ENCODE measurements at regions of chr17 and their contacts with region 1.

Region 1: GRCh38 chr17:57271821-57272220 is 15.5 kb downstream of the MSI2 start:
- DNase-seq: no peak
- ATAC-seq: no peak
- H3K4me3 ChIP-seq: no peak overlapping the region
- H3K27ac ChIP-seq: no peak overlapping the region
- H3K4me1 ChIP-seq: no peaks in the 10 kb centered on the region; the same call in 1 of the 2 replicates
- H3K27me3 ChIP-seq: no peaks in the 10 kb centered on the region
- CTCF ChIP-seq: no peak
- EP300 ChIP-seq: no peak
- POLR2A ChIP-seq: no peak
- RAD21 ChIP-seq: no peak

Region 2: GRCh38 chr17:57174591-57174990 is 97.2 kb before region 1 on chr17:
- CTCF ChIA-PET with region 1: no interaction called
- POLR2A ChIA-PET with region 1: no interaction called
- RAD21 ChIA-PET with region 1: no interaction called
- SMC1A ChIA-PET with region 1: no interaction called
- in situ Hi-C with region 1: no loop called
- intact Hi-C with region 1: no loop called
- DNase-seq: peak; percentile 55
- ATAC-seq: peak; percentile 95
- H3K4me3 ChIP-seq: 0 out of 2 replicates have a peak overlapping the region, but pooled peaks have one; percentile 1
- H3K27ac ChIP-seq: peak overlapping the region; percentile 13; the same call in 1 of the 2 replicates
- H3K4me1 ChIP-seq: peaks cover 13% of the 10 kb centered on the region
- H3K27me3 ChIP-seq: no peaks in the 10 kb centered on the region
- CTCF ChIP-seq: no peak
- EP300 ChIP-seq: peak in 1 of 2 experiments; percentile 74; a peak in 1 of 4 replicates
- POLR2A ChIP-seq: no peak
- RAD21 ChIP-seq: no peak

Region 3: GRCh38 chr17:57255776-57256681 is 15.8 kb before region 1 on chr17 and contains the start of gene MSI2:
- CTCF ChIA-PET with region 1: interaction called, 8 read pairs
- POLR2A ChIA-PET with region 1: interaction called, 4 read pairs
- RAD21 ChIA-PET with region 1: no interaction called
- SMC1A ChIA-PET with region 1: interaction called, 29 read pairs
- in situ Hi-C with region 1: no loop called
- intact Hi-C with region 1: no loop called
- DNase-seq: peak; percentile 51
- ATAC-seq: peak; percentile 82
- H3K4me3 ChIP-seq: peak within 1 kb of the TSS; percentile 95
- H3K27ac ChIP-seq: peak within 1 kb of the TSS; percentile 34
- H3K4me1 ChIP-seq: peaks cover 6% of the 10 kb centered on the region
- H3K27me3 ChIP-seq: no peaks in the 10 kb centered on the region
- CTCF ChIP-seq: no peak
- EP300 ChIP-seq: no peak
- POLR2A ChIP-seq: no peak
- RAD21 ChIP-seq: no peak
- polyA plus RNA-seq, gene MSI2: 6.1 to 9.5 TPM

Region 4: DNA sequence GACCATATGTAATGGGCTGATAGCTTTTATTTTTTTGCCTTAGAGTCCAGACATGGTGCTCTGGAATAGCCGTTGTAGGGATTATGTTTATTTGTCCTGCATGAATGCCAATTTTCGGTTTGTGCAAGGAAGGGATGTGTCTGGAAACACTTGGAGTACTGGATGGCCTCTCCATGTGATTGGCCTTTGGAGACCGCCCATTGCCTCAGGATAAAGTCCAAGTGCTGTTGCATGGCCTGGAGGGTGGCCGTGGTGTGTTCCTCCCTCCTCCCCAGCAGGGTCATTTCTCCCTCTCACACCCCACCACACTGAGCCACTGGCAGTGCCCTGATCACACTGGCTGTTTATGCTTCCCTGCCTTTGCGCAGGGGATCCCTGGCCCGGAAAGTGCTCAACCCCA is 78.5 kb after region 1 on chr17:
- CTCF ChIA-PET with region 1: no interaction called
- POLR2A ChIA-PET with region 1: no interaction called
- RAD21 ChIA-PET with region 1: no interaction called
- SMC1A ChIA-PET with region 1: no interaction called
- in situ Hi-C with region 1: no loop called
- intact Hi-C with region 1: no loop called
- DNase-seq: no peak
- ATAC-seq: no peak
- H3K4me3 ChIP-seq: no peak overlapping the region
- H3K27ac ChIP-seq: no peak overlapping the region
- H3K4me1 ChIP-seq: peaks cover 15% of the 10 kb centered on the region
- H3K27me3 ChIP-seq: no peaks in the 10 kb centered on the region
- CTCF ChIP-seq: no peak
- EP300 ChIP-seq: no peak
- POLR2A ChIP-seq: no peak
- RAD21 ChIP-seq: no peak

Measured in GM12878 (cell line).